ENCODE measurements at regions of chr18 and their contacts with region 1.

Region 1: GRCh38 chr18:11392292-11392691 is 217.1 kb upstream of the SLC35G4 start:
- DNase-seq: no peak
- ATAC-seq: no peak
- H3K4me3 ChIP-seq: no peak overlapping the region
- H3K27ac ChIP-seq: no peak overlapping the region
- H3K4me1 ChIP-seq: no peaks in the 10 kb centered on the region
- H3K27me3 ChIP-seq: peaks cover 2 to 11% of the 10 kb centered on the region in 2 experiments
- CTCF ChIP-seq: no peak
- EP300 ChIP-seq: no peak
- POLR2A ChIP-seq: no peak
- RAD21 ChIP-seq: no peak

Region 2: GRCh38 chr18:10312326-10313015 is 1079.8 kb before region 1 on chr18:
- CTCF ChIA-PET with region 1: no interaction called
- POLR2A ChIA-PET with region 1: no interaction called
- RAD21 ChIA-PET with region 1: no interaction called
- SMC1A ChIA-PET with region 1: no interaction called
- in situ Hi-C with region 1: no loop called
- intact Hi-C with region 1: no loop called
- DNase-seq: no peak
- ATAC-seq: no peak
- H3K4me3 ChIP-seq: no peak overlapping the region
- H3K27ac ChIP-seq: no peak overlapping the region
- H3K4me1 ChIP-seq: no peaks in the 10 kb centered on the region
- H3K27me3 ChIP-seq: peaks cover 0 to 2% of the 10 kb centered on the region in 2 experiments; a peak in 1 of 4 replicates
- CTCF ChIP-seq: no peak
- EP300 ChIP-seq: no peak
- POLR2A ChIP-seq: no peak
- RAD21 ChIP-seq: no peak

Region 3: GRCh38 chr18:11343096-11343495 is 49.2 kb before region 1 on chr18:
- CTCF ChIA-PET with region 1: no interaction called
- POLR2A ChIA-PET with region 1: no interaction called
- RAD21 ChIA-PET with region 1: no interaction called
- SMC1A ChIA-PET with region 1: no interaction called
- in situ Hi-C with region 1: loop called (anchors 5 kb)
- intact Hi-C with region 1: no loop called
- DNase-seq: no peak
- ATAC-seq: no peak
- H3K4me3 ChIP-seq: no peak overlapping the region
- H3K27ac ChIP-seq: no peak overlapping the region
- H3K4me1 ChIP-seq: no peaks in the 10 kb centered on the region
- H3K27me3 ChIP-seq: no peaks in the 10 kb centered on the region
- CTCF ChIP-seq: no peak
- EP300 ChIP-seq: no peak
- POLR2A ChIP-seq: no peak
- RAD21 ChIP-seq: no peak

Region 4: DNA sequence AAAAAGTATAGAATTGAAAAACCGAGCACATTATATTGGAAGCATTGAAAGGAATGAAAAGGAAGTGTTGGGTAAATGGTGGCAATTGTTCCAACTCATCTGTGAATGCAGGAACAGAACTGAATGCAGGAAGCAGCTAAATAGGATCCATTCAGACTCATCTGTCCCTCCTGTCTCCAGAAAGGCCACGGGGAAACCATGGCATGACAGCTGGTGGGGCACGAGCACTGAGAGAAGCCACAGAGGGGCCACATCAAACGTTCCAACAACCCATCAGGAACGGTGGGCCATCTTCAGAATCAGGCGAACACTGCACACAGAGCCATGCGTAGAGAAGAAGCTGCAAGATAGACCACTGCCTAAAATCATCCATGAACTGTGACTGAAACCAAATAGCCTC is 78.6 kb after region 1 on chr18:
- CTCF ChIA-PET with region 1: no interaction called
- POLR2A ChIA-PET with region 1: no interaction called
- RAD21 ChIA-PET with region 1: no interaction called
- SMC1A ChIA-PET with region 1: no interaction called
- in situ Hi-C with region 1: no loop called
- intact Hi-C with region 1: no loop called
- DNase-seq: no peak
- ATAC-seq: no peak
- H3K4me3 ChIP-seq: no peak overlapping the region
- H3K27ac ChIP-seq: no peak overlapping the region
- H3K4me1 ChIP-seq: no peaks in the 10 kb centered on the region
- H3K27me3 ChIP-seq: no peaks in the 10 kb centered on the region
- CTCF ChIP-seq: no peak
- EP300 ChIP-seq: no peak
- POLR2A ChIP-seq: no peak
- RAD21 ChIP-seq: no peak